Lower leg skin (tissue), 4 donors: ENCODE measurements at regions of chr2 and their contacts with region 1.

Region 1: GRCh38 chr2:172806493-172806892 is 70.8 kb downstream of the RAPGEF4 start:
- DNase-seq: no peak
- H3K4me3 ChIP-seq: no peak overlapping the region
- CTCF ChIP-seq: peak in 1 of 3 donors; percentile 20
- POLR2A ChIP-seq: no peak

Region 2: GRCh38 chr2:172772633-172773032 is 33.9 kb before region 1 on chr2:
- intact Hi-C with region 1: no loop called
- DNase-seq: no peak
- H3K4me3 ChIP-seq: no peak overlapping the region
- CTCF ChIP-seq: no peak
- POLR2A ChIP-seq: no peak

Region 3: GRCh38 chr2:173812321-173812720 is 1005.8 kb after region 1 on chr2:
- intact Hi-C with region 1: loop called (anchors 5 kb)
- DNase-seq: no peak
- H3K4me3 ChIP-seq: no peak overlapping the region
- CTCF ChIP-seq: no peak
- POLR2A ChIP-seq: no peak